Activated naive CD4-positive, alpha-beta T cell treated with anti-CD3 and anti-CD28 coated beads for 36 hours (primary cell): ENCODE measurements at regions of chr1 and their contacts with region 1.

Region 1: DNA sequence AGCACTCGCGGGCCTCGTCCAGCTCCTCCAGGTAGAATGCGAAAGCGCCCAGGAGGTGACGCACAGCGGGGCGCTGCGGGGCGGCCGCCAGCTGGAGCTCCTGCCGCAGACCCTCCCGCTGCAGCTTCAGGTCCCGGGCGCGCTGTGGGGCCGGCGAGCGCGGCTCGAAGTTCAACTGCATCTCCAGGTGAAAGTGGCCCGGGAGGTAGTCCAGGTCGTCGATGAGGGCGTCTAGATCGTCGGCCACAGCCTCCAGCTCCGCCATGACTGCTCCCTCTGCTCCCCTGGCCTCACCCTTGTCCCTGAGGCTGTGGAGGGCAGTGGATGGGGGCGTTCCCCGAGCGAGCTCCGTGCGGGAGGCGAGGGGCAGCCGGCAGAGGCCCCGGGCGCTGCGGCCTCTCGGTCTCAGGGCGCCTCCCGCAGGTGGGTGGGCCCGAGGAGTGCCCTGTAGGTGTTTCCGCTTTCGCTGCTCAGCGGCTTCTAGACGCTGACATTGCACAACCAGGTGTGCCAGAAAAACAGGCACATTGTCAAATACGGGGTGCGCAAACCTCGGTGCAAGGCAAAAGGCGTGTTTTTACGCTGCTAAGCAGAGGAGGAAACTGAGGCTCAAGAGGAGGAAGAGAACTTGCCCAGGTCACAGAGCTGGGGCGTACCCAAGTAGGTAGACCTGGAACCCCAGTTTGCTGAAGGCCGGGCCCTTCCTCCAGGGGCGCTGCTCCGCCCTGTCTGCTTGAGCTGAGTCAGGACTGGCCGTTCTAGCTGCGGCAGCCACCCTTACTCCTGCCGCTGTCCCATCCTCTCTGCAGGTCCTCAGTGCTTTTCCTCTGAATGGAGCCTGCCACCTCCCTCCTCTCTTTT is at the start of gene TTC22:
- DNase-seq: peak; percentile 86
- H3K4me3 Mint-ChIP-seq: peak within 1 kb of the TSS; percentile 90
- H3K27ac Mint-ChIP-seq: peak within 1 kb of the TSS; percentile 91
- H3K4me1 Mint-ChIP-seq: peaks cover 55% of the 10 kb centered on the region
- H3K27me3 Mint-ChIP-seq: no peaks in the 10 kb centered on the region
- total RNA-seq, gene TTC22: 6.9 to 8.6 TPM

Region 2: DNA sequence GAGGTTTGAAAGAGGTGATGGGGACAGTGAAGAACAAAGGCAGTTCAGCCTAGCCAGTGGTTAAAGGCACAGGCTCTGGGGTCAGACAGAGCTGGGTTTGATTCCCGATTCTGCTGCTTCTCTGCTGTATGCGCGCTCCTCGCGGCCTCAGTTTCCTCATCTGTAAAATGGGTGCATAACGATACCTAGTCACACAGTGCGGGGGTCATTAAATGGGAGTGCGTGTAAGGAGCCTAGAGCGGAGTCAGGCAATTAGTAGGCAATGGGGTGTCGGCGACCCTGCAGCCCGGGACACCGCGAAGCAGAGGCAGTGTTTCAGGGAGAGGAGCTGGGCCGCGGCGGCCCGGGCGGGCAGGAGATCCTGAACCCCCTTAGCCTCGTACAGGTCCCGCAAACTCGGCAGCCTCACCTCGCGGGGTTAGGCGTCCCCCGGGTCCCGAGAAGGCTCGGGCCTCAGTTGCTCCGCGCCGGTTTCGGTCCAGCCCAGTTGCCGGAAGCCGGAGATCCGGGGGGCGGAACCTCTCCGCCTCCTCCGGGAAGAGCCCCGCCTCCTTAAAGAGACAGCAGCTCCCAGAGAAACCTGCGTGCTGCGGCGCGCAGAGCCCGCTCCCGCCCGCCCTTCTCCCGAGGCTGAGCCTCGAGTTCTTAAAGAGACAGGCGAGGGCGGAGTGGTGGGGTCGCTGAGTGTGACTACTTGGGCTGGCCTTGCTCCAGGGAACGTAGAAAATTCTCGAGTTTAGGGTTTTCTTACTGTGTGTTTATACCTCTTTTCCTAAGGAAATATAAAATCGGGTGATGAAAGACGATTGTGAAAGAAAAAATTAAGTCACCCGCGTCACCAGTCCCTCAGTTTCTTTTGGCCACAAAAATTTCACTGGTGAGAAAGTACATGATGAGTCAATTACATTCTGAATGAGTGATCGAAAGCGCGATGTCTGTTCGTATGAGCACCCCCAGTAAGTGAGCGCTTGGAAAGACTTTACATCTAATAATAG is 911.5 kb before region 1 on chr1 and contains the start of gene YIPF1:
- CTCF ChIA-PET with region 1: no interaction called
- intact Hi-C with region 1: loop called (anchors 1 kb)
- DNase-seq: peak; percentile 91
- H3K4me3 Mint-ChIP-seq: peak within 1 kb of the TSS; percentile 94
- H3K27ac Mint-ChIP-seq: peak within 1 kb of the TSS; percentile 99
- H3K4me1 Mint-ChIP-seq: peaks cover 39% of the 10 kb centered on the region
- H3K27me3 Mint-ChIP-seq: no peaks in the 10 kb centered on the region
- total RNA-seq, gene YIPF1: 22.2 to 22.4 TPM

Region 3: DNA sequence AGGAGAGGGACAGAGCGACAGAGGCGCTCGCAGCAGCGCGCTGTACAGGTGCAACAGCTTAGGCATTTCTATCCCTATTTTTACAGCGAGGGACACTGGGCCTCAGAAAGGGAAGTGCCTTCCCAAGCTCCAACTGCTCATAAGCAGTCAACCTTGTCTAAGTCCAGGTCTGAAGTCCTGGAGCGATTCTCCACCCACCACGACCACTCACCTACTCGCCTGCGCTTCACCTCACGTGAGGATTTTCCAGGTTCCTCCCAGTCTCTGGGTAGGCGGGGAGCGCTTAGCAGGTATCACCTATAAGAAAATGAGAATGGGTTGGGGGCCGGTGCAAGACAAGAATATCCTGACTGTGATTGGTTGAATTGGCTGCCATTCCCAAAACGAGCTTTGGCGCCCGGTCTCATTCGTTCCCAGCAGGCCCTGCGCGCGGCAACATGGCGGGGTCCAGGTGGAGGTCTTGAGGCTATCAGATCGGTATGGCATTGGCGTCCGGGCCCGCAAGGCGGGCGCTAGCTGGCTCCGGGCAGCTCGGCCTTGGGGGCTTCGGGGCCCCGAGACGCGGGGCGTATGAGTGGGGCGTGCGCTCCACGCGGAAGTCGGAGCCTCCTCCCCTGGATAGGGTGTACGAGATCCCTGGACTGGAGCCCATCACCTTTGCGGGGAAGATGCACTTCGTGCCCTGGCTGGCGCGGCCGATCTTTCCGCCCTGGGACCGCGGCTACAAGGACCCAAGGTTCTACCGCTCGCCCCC is 601.2 kb before region 1 on chr1 and contains the starts of genes CYB5RL and MRPL37:
- CTCF ChIA-PET with region 1: no interaction called
- intact Hi-C with region 1: loop called (anchors 1 kb)
- DNase-seq: peak; percentile 96
- H3K4me3 Mint-ChIP-seq: peak within 1 kb of the TSS; percentile 92
- H3K27ac Mint-ChIP-seq: peak within 1 kb of the TSS; percentile 59
- H3K4me1 Mint-ChIP-seq: peaks cover 32% of the 10 kb centered on the region
- H3K27me3 Mint-ChIP-seq: no peaks in the 10 kb centered on the region
- total RNA-seq, gene CYB5RL: 12.7 to 13.6 TPM
- total RNA-seq, gene MRPL37: 203 to 211 TPM

Region 4: GRCh38 chr1:54542120-54542961 is 258.8 kb before region 1 on chr1:
- CTCF ChIA-PET with region 1: interaction called, 6 read pairs
- intact Hi-C with region 1: loop called (anchors 2 kb)
- DNase-seq: peak; percentile 85
- H3K4me3 Mint-ChIP-seq: peak overlapping the region; percentile 70
- H3K27ac Mint-ChIP-seq: no peak overlapping the region
- H3K4me1 Mint-ChIP-seq: peaks cover 11% of the 10 kb centered on the region
- H3K27me3 Mint-ChIP-seq: no peaks in the 10 kb centered on the region

Region 5: GRCh38 chr1:54764133-54764921 is 36.8 kb before region 1 on chr1 and contains the start of gene PARS2:
- CTCF ChIA-PET with region 1: interaction called, 7 read pairs
- intact Hi-C with region 1: loop called (anchors 1 kb)
- DNase-seq: peak; percentile 96
- H3K4me3 Mint-ChIP-seq: peak within 1 kb of the TSS; percentile 94
- H3K27ac Mint-ChIP-seq: peak within 1 kb of the TSS; percentile 83
- H3K4me1 Mint-ChIP-seq: peaks cover 19% of the 10 kb centered on the region
- H3K27me3 Mint-ChIP-seq: no peaks in the 10 kb centered on the region
- total RNA-seq, gene PARS2: 3.0 to 3.1 TPM

Region 6: DNA sequence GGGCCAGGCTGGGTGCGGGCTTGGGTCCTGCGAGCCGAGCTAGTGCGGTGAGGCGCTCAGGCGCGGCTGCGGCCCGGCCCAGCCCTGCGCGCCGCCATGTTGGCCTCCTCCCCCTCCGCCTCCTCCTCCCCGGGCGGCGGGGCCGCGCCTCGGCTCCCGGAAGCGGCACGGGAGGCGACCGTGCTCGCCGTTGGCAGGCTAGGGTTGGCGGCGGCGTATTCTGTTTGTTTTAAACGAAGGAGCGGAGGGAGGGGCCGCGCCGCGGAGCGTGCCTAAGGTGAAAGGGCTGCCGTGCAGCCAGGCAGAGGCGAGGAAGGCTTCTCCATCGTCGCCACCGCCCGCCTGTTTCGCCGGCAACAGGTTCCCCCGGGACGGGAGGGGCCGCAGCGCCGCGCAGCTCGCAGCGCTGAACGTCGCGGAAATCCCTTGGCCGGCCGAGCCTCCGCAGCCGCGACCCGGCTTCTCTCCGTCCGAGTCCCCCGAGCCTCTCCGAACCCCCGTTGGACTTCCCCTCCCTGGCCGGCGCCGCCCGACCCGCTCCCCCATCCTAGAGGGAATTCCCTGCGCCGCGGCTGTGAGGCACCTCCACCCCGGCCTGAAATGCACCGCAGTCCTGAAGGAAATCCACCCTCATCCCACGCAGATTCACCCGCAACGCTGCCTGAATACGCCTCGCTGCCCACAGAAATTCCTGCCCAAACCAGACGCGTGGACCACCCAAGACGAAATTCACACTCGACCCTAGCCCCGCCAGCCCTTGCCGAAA is 414.3 kb after region 1 on chr1 and contains the start of gene USP24:
- CTCF ChIA-PET with region 1: no interaction called
- intact Hi-C with region 1: loop called (anchors 2 kb)
- DNase-seq: peak; percentile 81
- H3K4me3 Mint-ChIP-seq: peak within 1 kb of the TSS; percentile 98
- H3K27ac Mint-ChIP-seq: peak within 1 kb of the TSS; percentile 97
- H3K4me1 Mint-ChIP-seq: peaks cover 43% of the 10 kb centered on the region
- H3K27me3 Mint-ChIP-seq: no peaks in the 10 kb centered on the region
- total RNA-seq, gene USP24: 37.1 to 39.7 TPM